Breast epithelium (tissue), 4 donors: ENCODE measurements at regions of chr7 and their contacts with region 1.

Region 1: DNA sequence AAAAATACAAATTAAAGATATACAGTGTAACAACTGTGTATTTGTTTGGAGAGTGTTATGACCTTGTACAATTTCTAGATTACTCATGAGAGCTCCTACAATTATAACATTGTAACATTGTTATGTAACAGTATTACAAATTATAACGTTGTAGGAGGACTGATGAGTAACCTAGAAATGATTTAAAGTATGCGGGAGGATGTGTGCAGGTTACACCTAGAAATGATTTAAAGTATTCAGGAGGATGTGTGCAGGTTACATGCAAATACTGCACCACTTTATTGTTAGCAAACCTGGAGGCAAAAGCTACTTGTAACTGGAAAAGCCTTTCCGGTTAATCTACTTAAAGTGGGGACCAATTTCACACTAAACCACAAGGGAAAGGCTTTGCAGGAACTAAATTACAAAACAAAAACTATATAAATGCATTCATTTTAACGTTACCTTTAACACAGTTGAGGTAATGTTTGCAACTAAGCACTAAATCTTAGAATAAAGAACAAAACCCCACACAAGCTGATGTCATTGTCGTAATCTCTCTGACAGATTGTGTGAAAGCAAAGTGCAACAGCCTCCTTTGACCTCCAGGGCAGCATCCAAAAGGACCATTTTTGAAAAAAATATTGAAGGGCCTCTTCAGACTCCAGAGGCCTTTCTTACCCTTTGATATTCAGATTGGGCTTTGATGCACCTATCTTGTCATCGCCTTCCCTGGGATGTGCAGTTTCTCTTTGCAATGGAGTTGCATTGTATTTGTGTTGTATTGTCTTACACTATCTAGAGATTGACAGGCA is 522.1 kb upstream of the FOXK1 start:
- DNase-seq: no peak
- H3K4me3 ChIP-seq: no peak overlapping the region
- H3K27ac ChIP-seq: no peak overlapping the region
- H3K4me1 ChIP-seq: peaks cover 0 to 3% of the 10 kb centered on the region in 2 donors
- H3K27me3 ChIP-seq: no peaks in the 10 kb centered on the region
- CTCF ChIP-seq: no peak
- POLR2A ChIP-seq: no peak

Region 2: GRCh38 chr7:2939193-2939885 is 1220.6 kb before region 1 on chr7:
- intact Hi-C with region 1: loop called (anchors 5 kb)
- DNase-seq: peak in 1 of 2 donors; percentile 28
- H3K4me3 ChIP-seq: no peak overlapping the region
- H3K27ac ChIP-seq: no peak overlapping the region
- H3K4me1 ChIP-seq: no peaks in the 10 kb centered on the region
- H3K27me3 ChIP-seq: peaks cover 0 to 4% of the 10 kb centered on the region in 2 donors
- CTCF ChIP-seq: no peak
- POLR2A ChIP-seq: no peak

Region 3: GRCh38 chr7:4200592-4200991 is 40.6 kb after region 1 on chr7:
- intact Hi-C with region 1: no loop called
- DNase-seq: no peak
- H3K4me3 ChIP-seq: no peak overlapping the region
- H3K27ac ChIP-seq: no peak overlapping the region
- H3K4me1 ChIP-seq: no peaks in the 10 kb centered on the region
- H3K27me3 ChIP-seq: no peaks in the 10 kb centered on the region
- CTCF ChIP-seq: no peak
- POLR2A ChIP-seq: no peak